Activated T-helper 1 cell treated with anti-CD3 and anti-CD28 coated beads, Interleukin-12 subunit alpha, Interleukin-12 subunit beta, Interleukin-2, Interleukin-4 antibody, amounts not matched to agents 30 ng/mL and 10 ng/mL and 1 ng/mL, durations not matched to agents 14 hours and 24 hours and 36 hours (primary cell): ENCODE measurements at regions of chr1 and their contacts with region 1.

Region 1: DNA sequence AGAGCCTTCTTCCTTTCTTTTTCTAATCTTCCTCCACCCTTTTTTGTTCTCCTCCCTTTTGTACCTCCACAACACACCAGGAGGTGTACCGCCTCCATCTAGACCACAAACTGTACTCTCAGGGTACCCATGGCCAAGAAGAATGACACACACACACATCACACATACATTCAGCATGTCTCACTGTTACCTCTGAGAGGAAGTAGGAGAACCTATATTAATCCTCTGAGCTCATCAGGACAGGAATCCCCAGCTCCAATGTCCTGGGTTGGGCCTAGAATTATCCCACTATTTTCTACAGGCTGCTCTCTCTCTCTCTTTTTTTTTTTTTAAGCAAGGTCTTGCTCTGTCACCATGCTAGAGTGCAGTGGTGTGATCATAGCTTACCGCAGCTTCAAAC is 36.7 kb downstream of the ATP2B4 start:
- DNase-seq: no peak
- H3K4me3 Mint-ChIP-seq: peak overlapping the region; percentile 21
- H3K27ac Mint-ChIP-seq: peak overlapping the region; percentile 90
- H3K4me1 Mint-ChIP-seq: peaks cover 68% of the 10 kb centered on the region
- H3K27me3 Mint-ChIP-seq: no peaks in the 10 kb centered on the region

Region 2: DNA sequence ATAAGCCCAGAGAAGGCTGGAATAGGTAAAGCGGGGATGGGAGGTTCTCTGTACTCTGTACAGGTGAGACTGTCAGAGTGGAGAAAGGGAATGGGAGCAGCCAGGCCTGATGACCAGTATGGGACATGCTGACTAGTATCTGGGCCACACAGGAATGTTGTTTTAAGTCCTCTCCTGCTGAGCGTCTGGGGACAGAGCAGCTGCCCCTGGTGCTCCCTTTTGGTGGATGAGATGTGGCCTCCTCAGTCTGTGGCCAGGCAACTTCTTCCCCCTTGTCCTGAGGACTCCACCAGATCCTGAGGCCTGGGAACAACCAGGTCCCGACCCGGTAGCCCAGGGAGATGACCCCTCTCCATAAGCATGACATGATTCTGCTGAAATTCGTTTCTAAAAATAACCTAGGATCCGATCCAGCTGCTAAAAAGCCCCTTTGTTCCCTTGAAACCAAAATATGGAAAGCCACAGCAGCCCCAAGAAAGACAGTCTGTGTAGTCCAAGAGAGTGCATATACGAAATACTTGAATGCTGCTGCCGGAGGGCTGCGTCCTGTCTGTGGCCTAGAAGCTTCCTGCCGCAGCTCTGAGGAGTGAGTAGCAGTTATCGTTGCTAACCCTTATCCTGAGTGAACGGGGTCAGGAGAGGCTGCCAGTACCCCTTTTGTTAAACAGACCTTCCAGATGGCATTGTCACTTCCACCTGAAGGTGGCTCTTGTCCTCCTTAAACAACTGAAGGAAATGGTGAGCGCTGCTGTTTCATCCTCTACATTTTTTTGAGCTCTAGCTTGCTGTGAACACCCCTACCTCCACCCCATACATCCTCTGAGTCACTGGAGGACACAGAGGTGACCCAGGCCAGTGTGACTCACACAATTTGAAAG is 10.5 kb after region 1 on chr1:
- intact Hi-C with region 1: loop called (anchors 1 kb)
- DNase-seq: peak; percentile 71
- H3K4me3 Mint-ChIP-seq: peak overlapping the region; percentile 70
- H3K27ac Mint-ChIP-seq: peak overlapping the region; percentile 92
- H3K4me1 Mint-ChIP-seq: peaks cover 56% of the 10 kb centered on the region
- H3K27me3 Mint-ChIP-seq: no peaks in the 10 kb centered on the region